HepG2 (cell line): ENCODE measurements at regions of chr4 and their contacts with region 1.

Region 1: GRCh38 chr4:188439641-188440311 is 300.5 kb downstream of the TRIML1 start:
- DNase-seq: no peak
- ATAC-seq: peak; percentile 68
- H3K4me3 ChIP-seq: no peak overlapping the region
- H3K27ac ChIP-seq: no peak overlapping the region
- H3K4me1 ChIP-seq: peaks cover 22% of the 10 kb centered on the region
- H3K27me3 ChIP-seq: no peaks in the 10 kb centered on the region; a peak in 1 of 5 replicates
- CTCF ChIP-seq: no peak
- EP300 ChIP-seq: no peak
- POLR2A ChIP-seq: no peak
- RAD21 ChIP-seq: no peak

Region 2: GRCh38 chr4:188346171-188346809 is 93.5 kb before region 1 on chr4:
- CTCF ChIA-PET with region 1: no interaction called
- POLR2A ChIA-PET with region 1: no interaction called
- in situ Hi-C with region 1: no loop called
- intact Hi-C with region 1: no loop called
- DNase-seq: no peak
- ATAC-seq: no peak
- H3K4me3 ChIP-seq: no peak overlapping the region
- H3K27ac ChIP-seq: no peak overlapping the region
- H3K4me1 ChIP-seq: no peaks in the 10 kb centered on the region
- H3K27me3 ChIP-seq: no peaks in the 10 kb centered on the region; a peak in 2 of 5 replicates
- CTCF ChIP-seq: no peak
- EP300 ChIP-seq: no peak
- POLR2A ChIP-seq: no peak
- RAD21 ChIP-seq: no peak

Region 3: GRCh38 chr4:188455062-188455752 is 15.4 kb after region 1 on chr4:
- CTCF ChIA-PET with region 1: no interaction called
- POLR2A ChIA-PET with region 1: no interaction called
- in situ Hi-C with region 1: no loop called
- intact Hi-C with region 1: loop called (anchors 1 kb)
- DNase-seq: peak; percentile 46
- ATAC-seq: peak; percentile 71
- H3K4me3 ChIP-seq: peak overlapping the region; percentile 45 to 66 (median 53); a peak in 5 of 6 replicates
- H3K27ac ChIP-seq: no peak overlapping the region
- H3K4me1 ChIP-seq: 0 out of 2 replicates have a peak, but pooled peaks cover 6% of the 10 kb centered on the region
- H3K27me3 ChIP-seq: no peaks in the 10 kb centered on the region
- CTCF ChIP-seq: no peak
- EP300 ChIP-seq: no peak
- POLR2A ChIP-seq: peak in 1 of 2 experiments; percentile 37; a peak in 1 of 4 replicates
- RAD21 ChIP-seq: no peak

Region 4: GRCh38 chr4:188534917-188535316 is 95.1 kb after region 1 on chr4:
- CTCF ChIA-PET with region 1: no interaction called
- POLR2A ChIA-PET with region 1: no interaction called
- in situ Hi-C with region 1: no loop called
- intact Hi-C with region 1: loop called (anchors 10 kb)
- DNase-seq: peak; percentile 77
- ATAC-seq: peak; percentile 96
- H3K4me3 ChIP-seq: no peak overlapping the region
- H3K27ac ChIP-seq: peak overlapping the region; percentile 47
- H3K4me1 ChIP-seq: peaks cover 26% of the 10 kb centered on the region
- H3K27me3 ChIP-seq: no peaks in the 10 kb centered on the region
- CTCF ChIP-seq: no peak
- EP300 ChIP-seq: no peak; a peak in 1 of 4 replicates
- POLR2A ChIP-seq: no peak
- RAD21 ChIP-seq: no peak